CD4-positive, alpha-beta memory T cell (primary cell): ENCODE measurements at regions of chr2 and their contacts with region 1.

Region 1: DNA sequence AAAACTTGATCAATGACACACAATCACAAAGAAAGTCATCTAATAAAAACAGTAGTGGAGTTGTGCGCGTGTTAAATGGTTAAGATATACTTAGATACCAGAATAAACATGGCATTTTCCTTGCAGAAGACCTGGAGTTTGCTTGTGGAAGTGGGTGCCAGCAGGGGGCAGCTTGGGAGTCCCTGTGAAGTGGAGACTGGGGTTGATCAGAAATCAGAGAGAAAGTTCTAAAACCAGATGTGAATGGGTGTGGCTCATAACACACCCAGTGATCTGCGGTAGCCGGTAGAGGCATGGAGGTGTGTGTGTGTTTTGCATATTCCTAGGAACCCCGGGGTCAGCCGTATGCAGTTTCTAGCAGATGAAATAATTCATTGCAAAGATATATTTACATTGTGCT is 300.1 kb upstream of the TRIB2 start:
- DNase-seq: peak; percentile 64 to 71 (median 68)
- H3K4me3 ChIP-seq: no peak overlapping the region
- H3K4me3 Mint-ChIP-seq: peak overlapping the region in 7 of 8 donors; percentile 9 to 68 (median 52)
- H3K27ac ChIP-seq: no peak overlapping the region
- H3K27ac Mint-ChIP-seq: peak overlapping the region in 6 of 7 donors; percentile 0 to 65 (median 46)
- H3K4me1 ChIP-seq: peaks cover 49% of the 10 kb centered on the region
- H3K4me1 Mint-ChIP-seq: peaks cover 34 to 75% (median 49%) of the 10 kb centered on the region in 4 donors
- H3K27me3 ChIP-seq: no peaks in the 10 kb centered on the region
- H3K27me3 Mint-ChIP-seq: no peaks in the 10 kb centered on the region

Region 2: GRCh38 chr2:11863513-11864328 is 552.9 kb before region 1 on chr2:
- CTCF ChIA-PET with region 1: interaction called, 4 read pairs
- POLR2A ChIA-PET with region 1: no interaction called
- intact Hi-C with region 1: loop called (anchors 1 kb)
- DNase-seq: peak; percentile 59 to 67 (median 63)
- H3K4me3 ChIP-seq: peak overlapping the region in 1 of 2 donors; percentile 18
- H3K4me3 Mint-ChIP-seq: peak overlapping the region; percentile 54 to 87 (median 72)
- H3K27ac ChIP-seq: peak overlapping the region; percentile 3
- H3K27ac Mint-ChIP-seq: peak overlapping the region in 3 of 7 donors; percentile 26 to 50 (median 31)
- H3K4me1 ChIP-seq: peaks cover 25% of the 10 kb centered on the region
- H3K4me1 Mint-ChIP-seq: peaks cover 19 to 38% (median 23%) of the 10 kb centered on the region in 4 donors
- H3K27me3 ChIP-seq: no peaks in the 10 kb centered on the region
- H3K27me3 Mint-ChIP-seq: no peaks in the 10 kb centered on the region

Region 3: DNA sequence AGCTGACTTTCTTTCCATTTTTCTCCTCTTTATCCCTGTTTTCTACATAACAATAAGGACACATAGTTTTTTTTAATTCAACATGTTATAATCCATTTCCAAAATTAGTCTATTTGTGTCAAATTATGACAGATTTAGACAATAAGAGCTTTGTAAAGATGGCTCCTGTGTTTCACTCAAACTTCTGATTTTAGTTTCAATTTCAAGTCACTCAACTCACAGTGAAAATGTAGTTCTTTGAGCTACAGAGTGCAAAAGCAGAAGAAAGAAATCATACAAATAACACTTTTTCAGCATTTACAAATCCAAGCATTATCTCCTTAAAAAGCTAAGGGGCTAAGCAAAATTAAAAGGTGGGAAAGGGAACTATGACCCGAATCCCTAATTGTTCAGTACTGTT is 40.6 kb before region 1 on chr2:
- CTCF ChIA-PET with region 1: no interaction called
- POLR2A ChIA-PET with region 1: no interaction called
- intact Hi-C with region 1: no loop called
- DNase-seq: no peak
- H3K4me3 ChIP-seq: no peak overlapping the region
- H3K4me3 Mint-ChIP-seq: peak overlapping the region in 4 of 8 donors; percentile 33 to 68 (median 56)
- H3K27ac ChIP-seq: no peak overlapping the region
- H3K27ac Mint-ChIP-seq: peak overlapping the region in 4 of 7 donors; percentile 24 to 58 (median 35)
- H3K4me1 ChIP-seq: no peaks in the 10 kb centered on the region
- H3K4me1 Mint-ChIP-seq: peaks cover 4 to 14% (median 7%) of the 10 kb centered on the region in 4 donors
- H3K27me3 ChIP-seq: no peaks in the 10 kb centered on the region
- H3K27me3 Mint-ChIP-seq: no peaks in the 10 kb centered on the region

Region 4: DNA sequence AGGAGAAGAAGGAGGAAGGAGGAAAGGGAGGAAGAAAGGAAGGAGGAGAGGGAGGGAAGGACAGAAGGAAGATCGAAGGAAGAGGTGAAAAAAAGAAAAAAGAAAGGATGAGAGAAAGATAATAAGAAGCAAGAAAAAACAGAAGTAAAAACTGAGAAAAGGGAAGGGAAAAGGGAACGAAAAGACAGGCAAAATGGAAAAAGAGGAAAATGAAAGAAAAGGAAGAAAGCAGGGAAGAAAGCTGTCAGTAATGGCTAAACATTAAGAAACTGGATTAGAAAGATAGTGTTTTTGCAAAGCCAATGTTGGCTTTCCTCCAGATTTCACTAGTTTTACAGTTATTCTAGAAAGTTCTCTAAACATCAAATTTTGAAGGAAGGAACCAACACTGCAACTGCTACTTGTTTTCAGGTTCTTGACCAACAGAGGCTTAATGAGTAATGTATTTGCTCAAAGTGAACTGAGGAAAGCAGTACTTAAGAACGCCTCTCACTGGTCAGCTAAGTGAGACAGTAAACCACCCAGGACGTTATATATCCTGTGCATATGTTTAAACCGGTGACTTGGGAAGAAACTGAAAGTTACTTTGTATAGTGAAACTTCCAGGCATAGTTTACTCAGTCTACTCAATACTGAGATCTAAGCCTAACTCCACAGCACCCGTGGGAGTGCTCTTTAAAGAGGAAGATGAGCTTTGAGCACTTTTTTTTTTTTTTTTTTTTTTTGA is 14.0 kb after region 1 on chr2:
- CTCF ChIA-PET with region 1: interaction called, 12 read pairs
- POLR2A ChIA-PET with region 1: no interaction called
- intact Hi-C with region 1: no loop called
- DNase-seq: peak in 3 of 5 donors; percentile 9 to 26 (median 21)
- H3K4me3 ChIP-seq: peak overlapping the region in 1 of 2 donors; percentile 27
- H3K4me3 Mint-ChIP-seq: peak overlapping the region; percentile 50 to 83 (median 78)
- H3K27ac ChIP-seq: no peak overlapping the region
- H3K27ac Mint-ChIP-seq: peak overlapping the region; percentile 59 to 93 (median 88)
- H3K4me1 ChIP-seq: peaks cover 28% of the 10 kb centered on the region
- H3K4me1 Mint-ChIP-seq: peaks cover 19 to 44% (median 29%) of the 10 kb centered on the region in 4 donors
- H3K27me3 ChIP-seq: no peaks in the 10 kb centered on the region
- H3K27me3 Mint-ChIP-seq: no peaks in the 10 kb centered on the region

Region 5: DNA sequence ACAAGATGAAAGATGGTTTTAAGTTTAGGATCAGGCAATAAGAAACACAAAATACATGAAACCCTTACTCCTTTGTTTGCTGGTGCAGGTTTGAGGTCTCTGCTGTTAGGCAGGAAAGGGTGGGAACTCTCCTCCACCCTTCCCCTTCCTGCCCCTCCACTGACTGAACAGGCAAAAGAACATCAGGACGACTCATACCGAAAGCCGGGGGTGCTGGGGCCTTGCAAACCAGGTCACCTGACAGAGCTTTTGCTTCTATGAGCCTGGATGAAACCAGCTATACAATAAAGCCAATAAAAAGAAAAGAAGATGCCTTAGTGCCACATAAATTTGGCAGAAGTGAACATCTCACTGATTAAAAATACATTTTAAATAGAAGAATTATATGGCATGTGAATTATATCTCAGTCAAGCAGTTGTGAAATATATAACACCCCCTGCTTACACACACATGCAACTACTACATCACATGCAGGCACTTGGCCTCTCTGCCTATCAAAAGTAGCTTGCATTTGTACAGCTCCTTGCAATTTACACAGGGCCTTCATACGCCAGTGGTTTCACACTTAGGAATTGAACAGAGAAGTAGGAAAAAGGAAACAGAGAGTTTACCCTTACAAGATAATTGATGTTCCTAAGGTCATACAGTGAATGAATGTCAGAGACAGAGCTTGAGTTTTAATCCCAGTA is 85.0 kb after region 1 on chr2:
- CTCF ChIA-PET with region 1: interaction called, 8 read pairs
- POLR2A ChIA-PET with region 1: no interaction called
- intact Hi-C with region 1: loop called (anchors 5 kb)
- DNase-seq: peak; percentile 68 to 73 (median 70)
- H3K4me3 ChIP-seq: no peak overlapping the region
- H3K4me3 Mint-ChIP-seq: peak overlapping the region; percentile 12 to 89 (median 74)
- H3K27ac ChIP-seq: peak overlapping the region; percentile 56
- H3K27ac Mint-ChIP-seq: peak overlapping the region; percentile 83 to 98 (median 88)
- H3K4me1 ChIP-seq: peaks cover 98% of the 10 kb centered on the region
- H3K4me1 Mint-ChIP-seq: peaks cover 81 to 100% (median 92%) of the 10 kb centered on the region in 4 donors
- H3K27me3 ChIP-seq: no peaks in the 10 kb centered on the region
- H3K27me3 Mint-ChIP-seq: no peaks in the 10 kb centered on the region

Region 6: DNA sequence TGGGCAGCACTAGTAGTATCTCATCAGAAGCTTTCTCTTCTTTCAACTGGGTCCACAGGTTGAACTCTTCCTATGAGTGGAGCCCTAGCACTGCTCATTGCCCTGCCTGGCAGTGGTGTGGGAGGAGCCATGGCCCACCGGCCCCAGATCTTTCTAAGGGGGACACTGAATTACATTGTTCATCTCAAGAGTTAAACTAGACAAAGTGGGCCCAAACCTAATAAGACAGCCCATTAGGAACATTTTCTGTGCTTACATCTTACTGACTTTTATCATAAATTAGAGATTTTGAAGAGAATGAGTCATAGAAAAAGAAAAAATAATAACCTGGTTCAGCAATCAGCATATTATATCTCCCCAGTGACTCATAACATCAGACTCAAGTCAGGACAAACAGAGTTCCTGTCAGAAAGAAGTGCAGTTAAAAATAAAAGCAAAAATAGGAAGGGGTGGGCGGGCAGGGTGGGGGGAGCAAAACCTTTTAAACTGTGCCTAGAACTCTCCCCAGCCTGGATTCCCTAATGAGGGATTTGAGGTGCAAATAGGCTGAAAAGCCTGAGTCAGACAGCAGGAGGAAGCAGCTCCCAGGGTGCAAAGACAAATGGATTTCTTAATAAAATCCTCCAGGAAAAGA is 138.5 kb after region 1 on chr2:
- CTCF ChIA-PET with region 1: no interaction called
- POLR2A ChIA-PET with region 1: no interaction called
- intact Hi-C with region 1: loop called (anchors 5 kb)
- DNase-seq: peak in 2 of 5 donors; percentile 18 to 19
- H3K4me3 ChIP-seq: no peak overlapping the region
- H3K4me3 Mint-ChIP-seq: peak overlapping the region; percentile 6 to 75 (median 56)
- H3K27ac ChIP-seq: no peak overlapping the region
- H3K27ac Mint-ChIP-seq: peak overlapping the region; percentile 74 to 94 (median 87)
- H3K4me1 ChIP-seq: peaks cover 31% of the 10 kb centered on the region
- H3K4me1 Mint-ChIP-seq: peaks cover 33 to 49% (median 38%) of the 10 kb centered on the region in 4 donors
- H3K27me3 ChIP-seq: no peaks in the 10 kb centered on the region
- H3K27me3 Mint-ChIP-seq: no peaks in the 10 kb centered on the region

Region 7: GRCh38 chr2:12606472-12607000 is 189.9 kb after region 1 on chr2:
- CTCF ChIA-PET with region 1: interaction called, 6 read pairs
- POLR2A ChIA-PET with region 1: no interaction called
- intact Hi-C with region 1: loop called (anchors 1 kb)
- DNase-seq: peak in 4 of 5 donors; percentile 16 to 21 (median 16)
- H3K4me3 ChIP-seq: no peak overlapping the region
- H3K4me3 Mint-ChIP-seq: peak overlapping the region in 1 of 8 donors; percentile 15
- H3K27ac ChIP-seq: no peak overlapping the region
- H3K27ac Mint-ChIP-seq: no peak overlapping the region
- H3K4me1 ChIP-seq: peaks cover 16% of the 10 kb centered on the region
- H3K4me1 Mint-ChIP-seq: peaks cover 15 to 26% (median 21%) of the 10 kb centered on the region in 4 donors
- H3K27me3 ChIP-seq: no peaks in the 10 kb centered on the region
- H3K27me3 Mint-ChIP-seq: no peaks in the 10 kb centered on the region

Region 8: GRCh38 chr2:12709207-12709522 is 292.6 kb after region 1 on chr2:
- CTCF ChIA-PET with region 1: interaction called, 105 read pairs
- POLR2A ChIA-PET with region 1: interaction called, 4 read pairs
- intact Hi-C with region 1: no loop called
- DNase-seq: peak; percentile 65 to 78 (median 72)
- H3K4me3 ChIP-seq: no peak overlapping the region
- H3K4me3 Mint-ChIP-seq: peak overlapping the region in 6 of 8 donors; percentile 20 to 79 (median 70)
- H3K27ac ChIP-seq: peak overlapping the region; percentile 44
- H3K27ac Mint-ChIP-seq: peak overlapping the region; percentile 87 to 98 (median 92)
- H3K4me1 ChIP-seq: peaks cover 76% of the 10 kb centered on the region
- H3K4me1 Mint-ChIP-seq: peaks cover 50 to 85% (median 72%) of the 10 kb centered on the region in 4 donors
- H3K27me3 ChIP-seq: no peaks in the 10 kb centered on the region
- H3K27me3 Mint-ChIP-seq: no peaks in the 10 kb centered on the region

Region 9: DNA sequence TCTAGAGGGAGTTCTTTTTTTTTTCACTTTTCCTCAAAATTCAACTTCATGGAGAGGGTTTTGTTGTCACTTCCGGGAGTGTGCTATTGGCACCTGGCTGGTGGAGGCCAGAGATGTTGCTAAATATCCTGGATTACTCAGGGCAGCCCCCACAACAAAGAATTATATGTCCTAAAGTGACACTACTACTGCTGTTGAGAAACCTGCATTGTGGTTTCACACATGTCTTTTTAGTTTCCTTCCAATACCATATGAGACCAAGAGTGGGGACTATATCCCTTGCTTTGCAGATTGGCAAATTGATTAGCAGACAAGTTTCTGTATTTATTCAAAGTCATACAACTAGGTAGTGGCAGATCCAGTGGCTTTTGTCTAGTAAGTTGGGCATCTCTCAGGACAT is 1127.0 kb after region 1 on chr2:
- CTCF ChIA-PET with region 1: no interaction called
- POLR2A ChIA-PET with region 1: no interaction called
- intact Hi-C with region 1: no loop called
- DNase-seq: no peak
- H3K4me3 ChIP-seq: no peak overlapping the region
- H3K4me3 Mint-ChIP-seq: no peak overlapping the region
- H3K27ac ChIP-seq: no peak overlapping the region
- H3K27ac Mint-ChIP-seq: no peak overlapping the region
- H3K4me1 ChIP-seq: no peaks in the 10 kb centered on the region
- H3K4me1 Mint-ChIP-seq: no peaks in the 10 kb centered on the region
- H3K27me3 ChIP-seq: no peaks in the 10 kb centered on the region
- H3K27me3 Mint-ChIP-seq: no peaks in the 10 kb centered on the region